ENCODE measurements at regions of chr12 and their contacts with region 1.

Region 1: DNA sequence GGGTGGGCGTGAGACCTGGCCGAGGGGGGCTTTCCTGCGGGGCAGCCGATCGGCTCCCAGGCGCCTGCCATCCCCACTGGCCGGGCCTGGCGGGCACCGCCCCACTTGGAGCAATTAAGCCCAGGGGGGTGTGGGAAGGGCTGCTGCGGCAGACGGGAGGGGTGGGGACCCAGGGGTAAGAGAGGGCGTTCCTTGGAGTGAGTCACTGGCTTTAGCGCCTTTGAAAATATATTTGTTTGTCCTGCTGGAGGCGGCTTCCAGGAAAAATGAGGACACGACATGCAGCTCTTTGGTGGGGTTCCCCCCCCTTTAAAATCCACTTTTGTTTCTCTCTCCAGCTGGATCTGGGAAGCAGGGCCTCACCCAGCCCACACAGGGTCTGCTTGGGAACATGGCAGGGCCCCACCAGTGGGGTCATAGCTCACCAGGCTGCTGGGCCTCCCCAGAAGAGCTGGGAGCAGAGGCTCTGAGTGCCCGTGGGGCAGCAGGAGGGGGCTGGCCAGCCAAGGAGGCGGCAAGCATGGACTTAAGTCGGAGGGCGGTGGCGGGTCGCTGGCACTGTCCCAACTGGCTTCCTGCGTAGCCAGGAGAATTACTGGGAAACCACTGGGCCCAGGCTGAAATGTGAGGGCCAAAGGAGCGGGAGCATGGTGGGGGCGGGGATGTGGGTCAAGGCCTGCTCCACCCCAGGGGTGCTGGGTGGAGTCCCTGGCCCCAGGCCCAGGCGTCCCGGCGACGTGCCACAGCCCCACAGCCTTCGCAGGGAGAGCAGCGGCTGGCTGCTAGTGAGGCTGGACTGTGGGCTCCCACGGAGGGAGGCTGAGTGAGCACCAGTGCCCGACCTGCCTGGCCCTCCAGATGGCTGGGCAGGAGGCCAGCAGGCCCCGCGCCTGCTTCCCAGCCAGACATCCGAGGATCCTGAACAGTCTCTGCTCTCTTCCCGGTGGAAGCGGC is 128.0 kb downstream of the RFLNA start:
- DNase-seq: peak; percentile 76
- H3K4me3 ChIP-seq: no peak overlapping the region
- H3K27ac ChIP-seq: peak overlapping the region; percentile 47
- H3K4me1 ChIP-seq: peaks cover 23% of the 10 kb centered on the region
- H3K27me3 ChIP-seq: no peaks in the 10 kb centered on the region
- CTCF ChIP-seq: peak in 1 of 2 donors; percentile 14

Region 2: DNA sequence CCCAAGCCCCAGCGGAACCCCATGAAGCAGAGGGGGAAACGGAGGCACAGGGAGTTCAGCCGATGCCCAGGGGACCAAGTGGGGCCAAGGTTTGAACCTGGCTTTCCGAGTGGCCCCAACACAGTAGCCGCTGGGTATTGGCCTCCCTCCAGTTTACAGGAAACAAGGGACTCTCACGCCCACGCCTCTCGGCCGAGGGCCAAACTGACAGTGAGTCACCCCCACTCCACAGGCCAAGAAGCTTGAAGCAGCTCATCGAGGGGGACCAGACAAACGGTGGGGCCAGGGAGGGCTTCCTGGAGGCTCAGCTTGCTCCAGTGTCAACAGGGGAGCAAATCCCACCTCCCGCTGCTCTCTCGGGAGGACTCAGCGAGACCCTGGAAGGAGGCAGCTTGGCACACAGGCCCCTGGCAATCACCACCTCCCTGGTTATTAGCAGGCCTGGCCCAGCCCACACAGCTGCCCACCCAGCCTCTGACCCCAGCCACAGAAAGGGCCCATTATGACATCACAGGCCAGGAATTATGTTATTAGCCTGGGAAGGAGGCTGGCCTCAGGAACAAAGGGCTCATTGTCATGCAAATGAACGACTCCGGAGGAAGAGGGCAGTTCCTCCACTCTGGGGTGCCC is 89.9 kb after region 1 on chr12:
- CTCF ChIA-PET with region 1: no interaction called
- dilution Hi-C with region 1: no loop called
- in situ Hi-C with region 1: no loop called
- intact Hi-C with region 1: loop called (anchors 5 kb)
- DNase-seq: peak; percentile 95
- H3K4me3 ChIP-seq: peak overlapping the region in 1 of 3 experiments; percentile 11
- H3K27ac ChIP-seq: peak overlapping the region; percentile 62
- H3K4me1 ChIP-seq: peaks cover 88% of the 10 kb centered on the region
- H3K27me3 ChIP-seq: no peaks in the 10 kb centered on the region
- CTCF ChIP-seq: no peak